ENCODE measurements at regions of chr1 and their contacts with region 1.

Region 1: GRCh38 chr1:12643079-12643478 is 806 bp upstream of the AADACL4 start:
- DNase-seq: no peak
- H3K4me3 ChIP-seq: no peak overlapping the region
- H3K27ac ChIP-seq: no peak overlapping the region
- H3K4me1 ChIP-seq: no peaks in the 10 kb centered on the region
- H3K27me3 ChIP-seq: no peaks in the 10 kb centered on the region
- CTCF ChIP-seq: no peak

Region 2: DNA sequence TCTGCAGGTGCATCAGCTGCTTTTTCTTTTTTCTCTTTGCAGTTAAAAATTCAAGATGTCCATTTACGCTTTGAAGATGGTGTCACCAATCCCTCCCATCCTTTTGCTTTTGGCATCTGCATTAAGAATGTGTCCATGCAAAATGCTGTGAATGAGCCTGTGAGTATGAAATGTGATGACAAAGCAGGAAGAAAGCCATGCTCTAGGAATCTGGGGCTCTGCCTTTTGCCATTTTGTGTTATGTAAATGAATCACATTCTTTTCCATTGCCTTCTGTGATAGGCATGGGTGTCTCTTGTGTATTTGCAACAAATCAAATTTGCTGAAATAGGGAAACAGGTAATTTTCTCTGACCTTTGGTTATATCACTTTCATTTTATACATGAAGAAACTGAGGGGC is 393.9 kb before region 1 on chr1:
- CTCF ChIA-PET with region 1: no interaction called
- POLR2A ChIA-PET with region 1: interaction called, 20 read pairs
- intact Hi-C with region 1: no loop called
- DNase-seq: no peak
- H3K4me3 ChIP-seq: no peak overlapping the region
- H3K27ac ChIP-seq: no peak overlapping the region
- H3K4me1 ChIP-seq: no peaks in the 10 kb centered on the region
- H3K27me3 ChIP-seq: no peaks in the 10 kb centered on the region
- CTCF ChIP-seq: no peak

Measured in PC-9 (cell line).